ENCODE measurements at regions of chr2 and their contacts with region 1.

Region 1: GRCh38 chr2:156435715-156436496 is at the start of gene GPD2:
- DNase-seq: peak; percentile 56
- H3K4me3 Mint-ChIP-seq: peak within 1 kb of the TSS; percentile 92
- H3K27ac Mint-ChIP-seq: peak within 1 kb of the TSS; percentile 98
- H3K4me1 Mint-ChIP-seq: peaks cover 34% of the 10 kb centered on the region
- H3K27me3 Mint-ChIP-seq: peaks cover 2% of the 10 kb centered on the region
- total RNA-seq, gene GPD2: 15.7 and 18.1 TPM in 2 replicates

Region 2: DNA sequence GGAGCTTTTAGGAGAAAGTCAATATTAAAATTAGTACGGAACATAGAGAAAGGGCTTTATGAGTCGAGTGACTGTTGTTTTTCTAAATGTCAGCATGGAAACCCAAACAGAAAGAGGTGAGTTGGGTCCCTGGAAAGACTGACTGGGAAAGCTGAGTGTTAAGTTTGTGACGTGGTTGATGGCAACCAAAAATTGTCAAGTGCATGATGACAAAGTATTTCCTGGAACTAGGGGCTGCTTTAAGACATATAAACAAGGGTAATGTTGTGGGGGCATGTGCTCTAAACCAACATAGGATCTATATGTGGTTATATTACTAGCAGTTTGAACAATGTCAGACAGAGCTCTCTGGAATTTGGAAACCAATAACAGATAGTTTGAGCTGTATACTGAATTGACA is 50.7 kb before region 1 on chr2:
- intact Hi-C with region 1: loop called (anchors 2 kb)
- DNase-seq: no peak
- H3K4me3 Mint-ChIP-seq: no peak overlapping the region
- H3K27ac Mint-ChIP-seq: peak overlapping the region; percentile 75
- H3K4me1 Mint-ChIP-seq: peaks cover 37% of the 10 kb centered on the region
- H3K27me3 Mint-ChIP-seq: peaks cover 4% of the 10 kb centered on the region

Region 3: GRCh38 chr2:156476850-156477206 is 40.9 kb after region 1 on chr2:
- intact Hi-C with region 1: loop called (anchors 2 kb)
- DNase-seq: peak; percentile 11
- H3K4me3 Mint-ChIP-seq: peak overlapping the region; percentile 76
- H3K27ac Mint-ChIP-seq: peak overlapping the region; percentile 92
- H3K4me1 Mint-ChIP-seq: peaks cover 69% of the 10 kb centered on the region
- H3K27me3 Mint-ChIP-seq: no peaks in the 10 kb centered on the region

Region 4: DNA sequence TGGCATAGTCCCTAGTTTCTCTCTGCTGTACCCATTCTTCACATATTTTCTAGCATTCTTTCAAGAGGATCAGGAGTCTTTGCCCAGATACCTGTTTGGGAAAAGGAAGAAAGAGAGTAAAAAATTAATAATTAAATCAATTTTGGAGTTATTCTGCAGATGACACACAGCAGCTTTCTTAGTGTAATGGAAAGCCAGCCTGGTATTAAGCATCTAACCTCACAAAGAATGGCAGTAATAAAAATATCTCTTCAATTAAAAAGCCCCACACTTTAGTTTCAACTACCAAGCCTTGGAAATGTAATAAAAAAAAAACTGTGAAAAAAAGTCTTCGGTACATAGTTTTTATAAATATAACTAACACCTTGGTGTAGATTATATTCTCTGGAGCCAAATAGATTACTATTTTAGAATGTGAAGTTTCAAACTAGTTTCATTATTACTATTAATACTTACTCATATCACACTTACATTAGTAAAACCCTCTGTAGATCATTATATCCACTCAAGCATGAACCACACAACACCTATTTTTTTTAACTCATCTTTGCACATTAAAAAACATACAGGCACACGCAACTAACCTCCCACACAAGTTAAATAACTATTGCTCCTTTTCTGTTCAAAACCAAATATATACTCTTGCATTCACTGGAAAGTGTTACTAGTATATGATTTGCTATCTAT is 91.2 kb after region 1 on chr2:
- intact Hi-C with region 1: loop called (anchors 5 kb)
- DNase-seq: no peak
- H3K4me3 Mint-ChIP-seq: no peak overlapping the region
- H3K27ac Mint-ChIP-seq: no peak overlapping the region
- H3K4me1 Mint-ChIP-seq: peaks cover 5% of the 10 kb centered on the region
- H3K27me3 Mint-ChIP-seq: no peaks in the 10 kb centered on the region

Measured in activated T-helper 1 cell treated with anti-CD3 and anti-CD28 coated beads, Interleukin-12 subunit alpha, Interleukin-12 subunit beta, Interleukin-2, Interleukin-4 antibody, amounts not matched to agents 30 ng/mL and 10 ng/mL and 1 ng/mL, durations not matched to agents 14 hours and 24 hours and 36 hours (primary cell).